Ascending aorta (tissue), 2 donors: ENCODE measurements at regions of chr1 and their contacts with region 1.

Region 1: GRCh38 chr1:175033953-175034352 is 10.7 kb upstream of the MRPS14 start:
- DNase-seq: no peak
- H3K4me3 ChIP-seq: no peak overlapping the region
- H3K27ac ChIP-seq: no peak overlapping the region
- H3K4me1 ChIP-seq: no peaks in the 10 kb centered on the region
- H3K27me3 ChIP-seq: no peaks in the 10 kb centered on the region
- CTCF ChIP-seq: no peak

Region 2: GRCh38 chr1:175124861-175125260 is 90.9 kb after region 1 on chr1:
- intact Hi-C with region 1: loop called (anchors 1 kb)
- DNase-seq: no peak
- H3K4me3 ChIP-seq: no peak overlapping the region
- H3K27ac ChIP-seq: no peak overlapping the region
- H3K4me1 ChIP-seq: no peaks in the 10 kb centered on the region
- H3K27me3 ChIP-seq: no peaks in the 10 kb centered on the region
- CTCF ChIP-seq: no peak

Region 3: DNA sequence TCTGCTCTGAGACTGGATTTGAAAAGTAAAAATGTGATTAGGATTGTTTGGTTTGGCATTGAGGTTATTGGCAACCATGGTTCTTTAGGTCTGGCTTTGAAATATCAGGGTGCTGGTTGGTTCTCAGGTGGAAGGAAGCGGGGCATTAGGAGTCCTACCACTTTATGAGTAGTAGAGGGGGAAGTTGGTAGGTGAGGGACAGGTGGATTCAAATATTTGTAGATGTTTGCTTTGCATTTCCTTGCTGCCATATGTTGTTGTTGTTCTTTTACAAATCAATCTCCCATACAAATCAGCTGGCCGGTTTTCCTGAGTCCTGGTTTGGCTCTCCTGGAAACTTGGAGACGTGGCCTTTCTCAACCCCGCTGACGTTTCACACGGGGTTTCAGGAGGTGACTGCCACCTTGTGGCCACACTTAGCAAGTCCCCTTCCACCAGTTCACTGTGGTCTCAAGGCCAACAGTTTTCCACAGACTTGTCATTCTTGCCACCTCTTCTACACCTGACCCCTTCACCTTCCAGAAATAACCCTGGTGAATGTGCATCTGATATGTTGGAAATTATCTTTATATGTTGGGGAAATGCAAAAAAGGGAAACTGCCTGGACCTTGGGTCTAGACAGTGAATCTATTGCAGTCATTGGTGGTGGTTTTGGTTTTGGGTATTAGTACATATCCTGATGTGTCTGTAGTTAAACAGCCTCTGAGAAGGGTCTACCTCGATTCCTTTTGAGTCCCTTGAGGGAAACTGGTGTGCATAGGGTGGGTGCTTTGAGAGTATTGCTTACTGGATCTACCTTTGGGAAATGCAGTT is 285.7 kb after region 1 on chr1:
- intact Hi-C with region 1: loop called (anchors 5 kb)
- DNase-seq: peak in 1 of 2 donors; percentile 83
- H3K4me3 ChIP-seq: no peak overlapping the region
- H3K27ac ChIP-seq: no peak overlapping the region
- H3K4me1 ChIP-seq: no peaks in the 10 kb centered on the region
- H3K27me3 ChIP-seq: no peaks in the 10 kb centered on the region
- CTCF ChIP-seq: peak; percentile 76 to 85 (median 78)